ENCODE measurements at regions of chr17 and their contacts with region 1.

Region 1: GRCh38 chr17:68759343-68760132 is 158.4 kb upstream of the FAM20A start:
- DNase-seq: peak; percentile 93 to 94
- ATAC-seq: peak; percentile 97
- H3K4me3 ChIP-seq: peak overlapping the region; percentile 32 to 44
- H3K27ac ChIP-seq: peak overlapping the region in 1 of 2 donors; percentile 9
- H3K4me1 ChIP-seq: no peaks in the 10 kb centered on the region
- H3K27me3 ChIP-seq: no peaks in the 10 kb centered on the region

Region 2: DNA sequence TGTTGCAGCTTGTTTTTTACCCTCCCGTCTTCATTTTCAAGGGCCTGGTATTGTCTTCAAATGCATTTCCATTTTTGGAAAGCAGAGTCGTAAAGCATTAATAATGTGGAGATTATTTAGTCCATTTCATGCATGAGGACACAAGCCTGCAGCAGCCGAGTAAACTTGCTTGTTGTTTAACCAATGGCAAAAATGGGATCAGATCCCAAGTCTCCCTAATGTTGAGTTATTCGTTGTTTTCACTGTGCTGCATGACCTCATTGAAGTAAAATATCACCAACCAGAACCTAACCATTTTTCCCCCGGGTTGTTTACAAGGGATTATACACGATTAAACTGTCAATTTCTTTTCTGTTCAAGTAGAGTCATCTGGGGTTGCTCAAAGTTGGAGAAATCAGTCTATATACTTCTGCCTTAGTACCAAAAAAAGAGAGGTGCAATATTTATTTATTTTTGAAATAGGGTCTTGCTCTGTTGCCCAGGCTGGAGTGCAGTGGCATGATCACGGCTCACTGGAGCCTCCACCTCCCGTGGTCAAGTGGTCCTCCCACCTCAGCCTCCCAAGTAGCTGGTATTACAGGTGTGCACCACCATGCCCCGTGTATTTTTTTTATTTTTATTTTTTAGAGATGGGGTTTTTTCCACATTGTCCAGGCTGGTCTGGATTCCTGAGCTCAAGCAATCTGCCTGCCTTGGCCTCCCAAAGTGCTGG is 499.3 kb before region 1 on chr17:
- intact Hi-C with region 1: loop called (anchors 5 to 10 kb)
- DNase-seq: no peak
- ATAC-seq: no peak
- H3K4me3 ChIP-seq: no peak overlapping the region
- H3K27ac ChIP-seq: no peak overlapping the region
- H3K4me1 ChIP-seq: peaks cover 0 to 2% of the 10 kb centered on the region in 2 donors
- H3K27me3 ChIP-seq: no peaks in the 10 kb centered on the region

Region 3: GRCh38 chr17:68457539-68458259 is 301.8 kb before region 1 on chr17:
- intact Hi-C with region 1: loop called in 1 of 2 experiments (anchors 5 kb)
- DNase-seq: peak; percentile 99
- ATAC-seq: peak; percentile 98
- H3K4me3 ChIP-seq: peak overlapping the region; percentile 41 to 44
- H3K27ac ChIP-seq: peak overlapping the region in 1 of 2 donors; percentile 62
- H3K4me1 ChIP-seq: peaks cover 0 to 2% of the 10 kb centered on the region in 2 donors
- H3K27me3 ChIP-seq: no peaks in the 10 kb centered on the region

Region 4: GRCh38 chr17:68468334-68468733 is 291.2 kb before region 1 on chr17:
- intact Hi-C with region 1: loop called (anchors 5 kb)
- DNase-seq: no peak
- ATAC-seq: no peak
- H3K4me3 ChIP-seq: no peak overlapping the region
- H3K27ac ChIP-seq: peak overlapping the region in 1 of 2 donors; percentile 50
- H3K4me1 ChIP-seq: no peaks in the 10 kb centered on the region
- H3K27me3 ChIP-seq: no peaks in the 10 kb centered on the region

Region 5: DNA sequence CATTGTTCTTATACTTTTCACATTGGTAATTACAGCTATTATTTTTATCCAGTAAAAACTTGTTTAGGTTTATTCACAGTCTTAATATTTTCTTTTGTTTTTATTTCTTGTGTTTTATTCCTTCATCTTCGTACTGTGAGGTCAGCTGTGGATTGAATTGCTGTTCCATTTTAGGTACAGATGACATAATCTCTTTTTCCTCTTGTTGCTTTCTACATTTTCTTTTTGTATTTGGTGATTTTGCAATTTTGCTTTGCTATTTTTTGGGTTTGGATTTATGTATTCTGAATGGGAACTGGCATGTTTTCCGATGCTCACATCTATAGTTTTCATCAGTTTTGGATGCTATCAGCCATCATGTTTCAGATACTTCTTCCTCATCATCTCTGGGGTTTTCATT is 280.4 kb before region 1 on chr17:
- intact Hi-C with region 1: no loop called
- DNase-seq: no peak
- ATAC-seq: no peak
- H3K4me3 ChIP-seq: no peak overlapping the region
- H3K27ac ChIP-seq: no peak overlapping the region
- H3K4me1 ChIP-seq: peaks cover 0 to 3% of the 10 kb centered on the region in 2 donors
- H3K27me3 ChIP-seq: no peaks in the 10 kb centered on the region

Region 6: GRCh38 chr17:68533887-68534694 is 225.4 kb before region 1 on chr17:
- intact Hi-C with region 1: loop called (anchors 2 to 10 kb)
- DNase-seq: no peak
- ATAC-seq: no peak
- H3K4me3 ChIP-seq: no peak overlapping the region
- H3K27ac ChIP-seq: no peak overlapping the region
- H3K4me1 ChIP-seq: no peaks in the 10 kb centered on the region
- H3K27me3 ChIP-seq: no peaks in the 10 kb centered on the region

Region 7: GRCh38 chr17:68539548-68540467 is 219.7 kb before region 1 on chr17:
- intact Hi-C with region 1: loop called (anchors 2 to 10 kb)
- DNase-seq: no peak
- ATAC-seq: peak; percentile 33
- H3K4me3 ChIP-seq: no peak overlapping the region
- H3K27ac ChIP-seq: no peak overlapping the region
- H3K4me1 ChIP-seq: no peaks in the 10 kb centered on the region
- H3K27me3 ChIP-seq: no peaks in the 10 kb centered on the region

Region 8: GRCh38 chr17:68807998-68808772 is 48.6 kb after region 1 on chr17:
- intact Hi-C with region 1: no loop called
- DNase-seq: no peak
- ATAC-seq: no peak
- H3K4me3 ChIP-seq: no peak overlapping the region
- H3K27ac ChIP-seq: no peak overlapping the region
- H3K4me1 ChIP-seq: no peaks in the 10 kb centered on the region
- H3K27me3 ChIP-seq: no peaks in the 10 kb centered on the region

Region 9: DNA sequence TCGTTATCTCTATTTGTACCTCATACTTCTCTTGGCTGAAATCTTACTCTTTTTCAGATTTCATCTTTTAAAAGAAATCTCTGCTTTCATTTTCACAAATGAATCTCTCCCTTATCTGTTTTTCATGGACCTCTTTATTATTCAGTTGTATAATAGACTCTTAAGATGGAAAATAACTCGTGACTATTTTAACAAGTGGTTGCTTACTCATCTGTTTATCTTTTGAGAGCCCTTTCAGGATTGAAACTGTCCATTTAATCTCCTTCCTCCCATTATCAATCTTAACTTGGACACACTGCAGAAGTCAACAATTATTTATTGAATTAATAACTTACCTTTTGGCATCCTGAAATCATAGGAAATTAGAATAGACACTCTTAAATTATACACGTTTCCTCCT is 126.9 kb after region 1 on chr17:
- intact Hi-C with region 1: no loop called
- DNase-seq: no peak
- ATAC-seq: no peak
- H3K4me3 ChIP-seq: no peak overlapping the region
- H3K27ac ChIP-seq: no peak overlapping the region
- H3K4me1 ChIP-seq: no peaks in the 10 kb centered on the region
- H3K27me3 ChIP-seq: no peaks in the 10 kb centered on the region